Heart right ventricle (tissue), 16 donors: ENCODE measurements at regions of chr9 and their contacts with region 1.

Region 1: GRCh38 chr9:14096258-14096922 is 217.6 kb downstream of the NFIB start:
- DNase-seq: peak in 1 of 2 donors; percentile 63
- ATAC-seq: peak; percentile 56 to 93 (median 82)
- H3K4me3 ChIP-seq: peak overlapping the region in 8 of 10 donors; percentile 3 to 43 (median 29)
- H3K27ac ChIP-seq: peak overlapping the region; percentile 50 to 93 (median 81)
- H3K4me1 ChIP-seq: peaks cover 3 to 85% (median 55%) of the 10 kb centered on the region in 9 donors
- H3K27me3 ChIP-seq: no peaks in the 10 kb centered on the region
- CTCF ChIP-seq: no peak

Region 2: GRCh38 chr9:13787234-13787833 is 309.1 kb before region 1 on chr9:
- intact Hi-C with region 1: loop called in 1 of 10 experiments (anchors 10 kb)
- DNase-seq: peak in 1 of 2 donors; percentile 82
- ATAC-seq: peak; percentile 84 to 95 (median 90)
- H3K4me3 ChIP-seq: peak overlapping the region in 8 of 10 donors; percentile 2 to 41 (median 26)
- H3K27ac ChIP-seq: peak overlapping the region; percentile 80 to 95 (median 87)
- H3K4me1 ChIP-seq: peaks cover 5 to 34% (median 26%) of the 10 kb centered on the region in 9 donors
- H3K27me3 ChIP-seq: no peaks in the 10 kb centered on the region
- CTCF ChIP-seq: no peak

Region 3: GRCh38 chr9:13898957-13899356 is 197.4 kb before region 1 on chr9:
- intact Hi-C with region 1: loop called in 2 of 10 experiments (anchors 5 kb)
- DNase-seq: peak in 1 of 2 donors; percentile 26
- ATAC-seq: no peak
- H3K4me3 ChIP-seq: no peak overlapping the region
- H3K27ac ChIP-seq: peak overlapping the region in 9 of 10 donors; percentile 37 to 86 (median 70)
- H3K4me1 ChIP-seq: peaks cover 0 to 64% (median 41%) of the 10 kb centered on the region in 9 donors
- H3K27me3 ChIP-seq: no peaks in the 10 kb centered on the region
- CTCF ChIP-seq: no peak

Region 4: GRCh38 chr9:14170973-14171596 is 74.7 kb after region 1 on chr9:
- intact Hi-C with region 1: no loop called
- DNase-seq: no peak
- ATAC-seq: no peak
- H3K4me3 ChIP-seq: no peak overlapping the region
- H3K27ac ChIP-seq: no peak overlapping the region
- H3K4me1 ChIP-seq: peaks cover 0 to 53% (median 8%) of the 10 kb centered on the region in 9 donors
- H3K27me3 ChIP-seq: no peaks in the 10 kb centered on the region
- CTCF ChIP-seq: no peak